Activated B cell treated with CpG ODN at 0.5 μM for 24 hours (primary cell): ENCODE measurements at regions of chr7 and their contacts with region 1.

Region 1: GRCh38 chr7:128933180-128933891 is 4.4 kb upstream of the IRF5 start:
- DNase-seq: no peak
- ATAC-seq: peak; percentile 43
- H3K4me3 Mint-ChIP-seq: peak overlapping the region; percentile 79
- H3K27ac Mint-ChIP-seq: peak overlapping the region; percentile 92
- H3K4me1 Mint-ChIP-seq: peaks cover 47% of the 10 kb centered on the region
- H3K27me3 Mint-ChIP-seq: no peaks in the 10 kb centered on the region
- CTCF ChIP-seq: no peak

Region 2: DNA sequence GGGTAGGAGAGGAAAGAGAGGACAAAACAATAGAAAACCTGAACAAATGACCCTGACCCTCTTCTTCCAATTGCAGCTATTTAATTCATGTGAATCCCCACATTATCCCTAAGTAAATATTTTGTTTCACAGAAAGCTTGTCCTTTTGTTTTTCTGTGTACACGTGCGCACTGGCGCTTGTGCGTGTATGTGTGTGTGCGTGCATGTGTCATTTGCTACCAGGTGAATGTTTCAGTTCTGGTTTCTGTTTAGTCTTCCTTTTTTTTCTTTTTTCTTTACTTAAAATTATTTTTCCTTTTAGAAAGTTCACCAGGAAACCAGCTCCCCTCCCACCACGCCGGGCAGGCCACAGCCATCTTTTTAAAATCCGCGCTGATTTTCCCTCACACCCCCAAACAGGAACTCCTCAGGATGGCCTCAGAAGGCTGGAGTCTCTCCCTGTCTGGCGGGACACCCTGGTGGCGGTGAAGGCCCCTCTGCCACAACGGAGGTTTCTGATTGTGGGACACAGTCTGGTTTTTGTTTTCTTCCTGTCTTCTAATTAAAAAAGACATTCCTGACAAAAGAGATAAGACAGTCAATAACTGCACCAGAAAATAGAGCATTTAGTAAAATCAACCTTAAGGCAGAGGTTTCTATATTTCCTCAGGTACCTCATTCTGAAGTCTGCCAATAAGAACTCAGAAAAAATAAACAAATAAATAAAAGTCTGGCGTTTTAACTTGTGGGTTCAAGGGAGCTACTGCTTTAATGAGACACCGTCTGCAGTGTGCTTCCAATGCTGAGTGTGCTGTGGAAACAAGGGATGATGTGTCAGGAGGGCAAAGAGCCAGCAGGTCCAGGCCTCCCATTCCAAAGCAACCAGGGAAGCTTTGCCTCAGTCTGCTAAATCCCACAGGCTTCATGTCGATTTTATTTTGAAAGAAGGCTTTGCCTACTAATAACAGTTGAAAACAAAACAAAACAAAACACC is 21.8 kb after region 1 on chr7:
- CTCF ChIA-PET with region 1: interaction called, 3 read pairs
- POLR2A ChIA-PET with region 1: interaction called, 12 read pairs
- intact Hi-C with region 1: no loop called
- DNase-seq: no peak
- ATAC-seq: peak; percentile 82
- H3K4me3 Mint-ChIP-seq: peak overlapping the region; percentile 61
- H3K27ac Mint-ChIP-seq: peak overlapping the region; percentile 93
- H3K4me1 Mint-ChIP-seq: peaks cover 51% of the 10 kb centered on the region
- H3K27me3 Mint-ChIP-seq: no peaks in the 10 kb centered on the region
- CTCF ChIP-seq: no peak